ENCODE measurements at regions of chr10 and their contacts with region 1.

Region 1: DNA sequence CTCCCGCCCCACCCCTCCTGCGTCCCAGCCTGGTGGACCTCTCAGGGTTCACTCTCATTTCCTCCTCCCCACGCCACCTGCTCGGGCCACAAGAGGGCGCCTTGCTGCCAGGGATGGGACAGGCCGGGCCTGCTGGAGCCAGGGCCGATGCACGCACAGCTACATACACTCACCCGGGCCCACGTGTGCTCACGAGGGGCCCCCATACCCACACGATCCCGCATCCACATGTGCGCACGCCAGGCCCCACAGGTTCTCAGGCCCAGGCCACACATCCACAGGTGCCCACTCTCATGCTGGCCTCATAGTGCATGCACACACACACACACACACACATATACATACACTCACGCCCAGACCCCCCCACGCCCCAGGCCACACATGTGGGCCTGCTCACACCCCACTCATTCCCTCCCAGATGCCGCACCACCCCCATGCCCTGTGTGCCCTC is 68.6 kb downstream of the LHPP start:
- DNase-seq: peak; percentile 76 to 92 (median 85)
- ATAC-seq: peak; percentile 97
- H3K4me3 ChIP-seq: no peak overlapping the region
- H3K4me3 Mint-ChIP-seq: peak overlapping the region; percentile 40
- H3K27ac ChIP-seq: no peak overlapping the region
- H3K27ac Mint-ChIP-seq: no peak overlapping the region
- H3K4me1 ChIP-seq: no peaks in the 10 kb centered on the region
- H3K4me1 Mint-ChIP-seq: peaks cover 14% of the 10 kb centered on the region
- H3K27me3 ChIP-seq: no peaks in the 10 kb centered on the region
- H3K27me3 Mint-ChIP-seq: no peaks in the 10 kb centered on the region
- CTCF ChIP-seq: peak; percentile 66

Region 2: DNA sequence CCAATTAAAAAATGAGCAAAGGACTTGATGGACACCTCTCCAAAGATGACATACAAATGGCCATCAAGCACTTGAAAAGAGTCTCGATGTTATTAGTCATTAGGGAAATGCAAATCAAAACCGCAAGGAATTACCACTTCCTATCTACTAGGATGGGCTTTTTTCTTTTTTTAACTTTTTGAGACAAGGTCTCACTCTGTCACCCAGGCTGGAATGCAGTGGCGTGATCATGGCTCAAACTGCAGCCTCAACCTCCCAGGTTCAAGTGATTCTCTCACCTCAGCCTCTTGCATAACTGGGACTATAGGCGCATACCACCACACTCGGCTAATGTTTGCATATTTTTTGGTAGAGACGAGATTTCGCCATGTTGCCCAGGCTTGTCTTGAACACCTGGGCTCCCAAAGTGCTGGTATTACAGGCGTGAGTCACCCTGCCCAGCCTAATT is 94.0 kb before region 1 on chr10:
- CTCF ChIA-PET with region 1: no interaction called
- POLR2A ChIA-PET with region 1: no interaction called
- intact Hi-C with region 1: no loop called
- DNase-seq: no peak
- ATAC-seq: no peak
- H3K4me3 ChIP-seq: no peak overlapping the region
- H3K4me3 Mint-ChIP-seq: no peak overlapping the region
- H3K27ac ChIP-seq: no peak overlapping the region
- H3K27ac Mint-ChIP-seq: no peak overlapping the region
- H3K4me1 ChIP-seq: no peaks in the 10 kb centered on the region
- H3K4me1 Mint-ChIP-seq: no peaks in the 10 kb centered on the region
- H3K27me3 ChIP-seq: no peaks in the 10 kb centered on the region
- H3K27me3 Mint-ChIP-seq: peaks cover 10% of the 10 kb centered on the region
- CTCF ChIP-seq: no peak

Region 3: GRCh38 chr10:124626759-124627380 is 96.6 kb after region 1 on chr10:
- CTCF ChIA-PET with region 1: interaction called, 4 read pairs
- POLR2A ChIA-PET with region 1: no interaction called
- intact Hi-C with region 1: loop called in 1 of 2 experiments (anchors 5 kb)
- DNase-seq: peak in 7 of 9 experiments; percentile 49 to 78 (median 62)
- ATAC-seq: peak; percentile 80
- H3K4me3 ChIP-seq: no peak overlapping the region
- H3K4me3 Mint-ChIP-seq: peak overlapping the region; percentile 45
- H3K27ac ChIP-seq: peak overlapping the region in 1 of 2 experiments; percentile 48
- H3K27ac Mint-ChIP-seq: peak overlapping the region; percentile 81
- H3K4me1 ChIP-seq: peaks cover 40% of the 10 kb centered on the region
- H3K4me1 Mint-ChIP-seq: peaks cover 52% of the 10 kb centered on the region
- H3K27me3 ChIP-seq: no peaks in the 10 kb centered on the region
- H3K27me3 Mint-ChIP-seq: no peaks in the 10 kb centered on the region
- CTCF ChIP-seq: no peak

Region 4: DNA sequence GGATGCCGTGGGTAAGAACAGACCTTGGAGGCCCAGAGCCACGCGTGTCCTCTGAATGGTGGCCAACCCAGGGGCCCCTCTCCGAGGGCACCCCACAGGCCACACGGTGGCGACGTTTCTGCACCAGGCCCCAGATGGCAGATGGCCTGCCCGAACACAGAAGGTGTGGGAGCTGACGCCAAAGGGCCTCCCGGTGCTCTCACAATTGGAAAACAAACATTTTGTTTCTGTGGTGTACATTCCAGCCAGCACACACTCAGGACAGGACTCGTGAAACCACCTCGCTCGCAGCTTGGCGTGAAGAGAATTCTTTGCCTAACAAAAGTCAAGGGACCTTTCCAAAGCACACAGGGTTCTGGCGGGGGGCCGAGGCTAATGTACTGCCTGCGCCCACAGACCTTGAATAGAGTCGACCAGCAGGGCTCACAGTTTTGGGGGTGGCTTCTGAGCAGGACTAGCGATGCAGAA is 101.9 kb after region 1 on chr10:
- CTCF ChIA-PET with region 1: interaction called, 7 read pairs
- POLR2A ChIA-PET with region 1: no interaction called
- intact Hi-C with region 1: loop called (anchors 5 kb)
- DNase-seq: peak in 6 of 9 experiments; percentile 43 to 73 (median 62)
- ATAC-seq: peak; percentile 30
- H3K4me3 ChIP-seq: no peak overlapping the region
- H3K4me3 Mint-ChIP-seq: no peak overlapping the region
- H3K27ac ChIP-seq: peak overlapping the region in 1 of 2 experiments; percentile 26
- H3K27ac Mint-ChIP-seq: peak overlapping the region; percentile 45
- H3K4me1 ChIP-seq: peaks cover 53% of the 10 kb centered on the region
- H3K4me1 Mint-ChIP-seq: peaks cover 64% of the 10 kb centered on the region
- H3K27me3 ChIP-seq: no peaks in the 10 kb centered on the region
- H3K27me3 Mint-ChIP-seq: no peaks in the 10 kb centered on the region
- CTCF ChIP-seq: peak; percentile 42

Region 5: GRCh38 chr10:124827474-124827873 is 297.2 kb after region 1 on chr10:
- CTCF ChIA-PET with region 1: interaction called, 14 read pairs
- POLR2A ChIA-PET with region 1: interaction called, 3 read pairs
- intact Hi-C with region 1: loop called (anchors 1 kb)
- DNase-seq: peak in 2 of 9 experiments; percentile 41 to 50
- ATAC-seq: no peak
- H3K4me3 ChIP-seq: no peak overlapping the region
- H3K4me3 Mint-ChIP-seq: no peak overlapping the region
- H3K27ac ChIP-seq: no peak overlapping the region
- H3K27ac Mint-ChIP-seq: no peak overlapping the region
- H3K4me1 ChIP-seq: no peaks in the 10 kb centered on the region
- H3K4me1 Mint-ChIP-seq: no peaks in the 10 kb centered on the region
- H3K27me3 ChIP-seq: no peaks in the 10 kb centered on the region
- H3K27me3 Mint-ChIP-seq: no peaks in the 10 kb centered on the region
- CTCF ChIP-seq: peak; percentile 68

Region 6: GRCh38 chr10:125060826-125061556 is 530.8 kb after region 1 on chr10:
- CTCF ChIA-PET with region 1: no interaction called
- POLR2A ChIA-PET with region 1: no interaction called
- intact Hi-C with region 1: loop called in 1 of 2 experiments (anchors 5 kb)
- DNase-seq: peak in 7 of 9 experiments; percentile 9 to 60 (median 39)
- ATAC-seq: no peak
- H3K4me3 ChIP-seq: no peak overlapping the region
- H3K4me3 Mint-ChIP-seq: no peak overlapping the region
- H3K27ac ChIP-seq: no peak overlapping the region
- H3K27ac Mint-ChIP-seq: no peak overlapping the region
- H3K4me1 ChIP-seq: peaks cover 14% of the 10 kb centered on the region
- H3K4me1 Mint-ChIP-seq: peaks cover 11% of the 10 kb centered on the region
- H3K27me3 ChIP-seq: no peaks in the 10 kb centered on the region
- H3K27me3 Mint-ChIP-seq: peaks cover 2% of the 10 kb centered on the region
- CTCF ChIP-seq: no peak